K562 (cell line): ENCODE measurements at regions of chr12 and their contacts with region 1.

Region 1: DNA sequence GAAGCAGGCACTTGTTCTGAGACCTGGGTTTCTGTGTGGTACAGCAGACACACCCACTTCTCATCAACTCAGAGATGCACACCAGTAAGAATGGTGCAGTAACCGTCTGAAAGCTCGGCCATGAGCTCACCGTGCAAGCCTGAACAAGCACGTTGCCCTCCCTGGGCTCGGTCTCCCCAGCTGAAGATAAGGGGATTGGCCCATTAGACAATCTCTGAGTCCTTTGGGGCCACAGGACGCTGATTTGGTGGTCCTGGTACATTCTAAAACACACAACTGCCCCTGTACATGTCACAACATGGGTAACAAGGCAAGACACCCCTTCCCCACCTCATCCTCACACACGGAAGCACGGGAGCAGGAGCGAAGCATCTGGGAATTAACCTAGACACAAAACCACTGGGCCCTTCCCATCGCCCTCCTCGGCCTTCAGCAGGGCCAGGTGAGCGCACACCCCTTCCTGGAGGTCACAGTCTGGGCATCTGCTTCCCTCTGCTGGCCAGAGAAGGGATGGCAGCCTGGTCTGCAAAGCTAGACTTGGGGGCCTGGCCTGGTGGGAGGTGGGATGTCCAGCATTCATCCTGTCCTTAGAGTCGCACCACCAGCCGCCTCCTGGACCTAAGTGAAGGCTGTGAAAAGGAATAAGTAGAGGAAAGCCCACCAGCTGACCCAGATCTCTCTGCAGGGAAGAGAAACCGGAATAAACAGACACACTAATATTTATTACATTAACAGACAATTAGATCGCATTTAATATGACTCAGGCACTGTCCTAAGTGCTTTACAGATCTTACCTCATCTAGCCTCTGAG is 18.9 kb upstream of the SMUG1 start:
- DNase-seq: peak; percentile 83 to 90 (median 88)
- ATAC-seq: peak; percentile 94
- H3K4me3 ChIP-seq: no peak overlapping the region
- H3K27ac ChIP-seq: no peak overlapping the region
- H3K4me1 ChIP-seq: peaks cover 6 to 13% of the 10 kb centered on the region in 2 experiments
- H3K27me3 ChIP-seq: peaks cover 2 to 14% of the 10 kb centered on the region in 2 experiments; a peak in 2 of 5 replicates
- CTCF ChIP-seq: peak; percentile 93 to 98 (median 94)
- EP300 ChIP-seq: no peak
- POLR2A ChIP-seq: no peak
- RAD21 ChIP-seq: peak; percentile 74 to 94

Region 2: DNA sequence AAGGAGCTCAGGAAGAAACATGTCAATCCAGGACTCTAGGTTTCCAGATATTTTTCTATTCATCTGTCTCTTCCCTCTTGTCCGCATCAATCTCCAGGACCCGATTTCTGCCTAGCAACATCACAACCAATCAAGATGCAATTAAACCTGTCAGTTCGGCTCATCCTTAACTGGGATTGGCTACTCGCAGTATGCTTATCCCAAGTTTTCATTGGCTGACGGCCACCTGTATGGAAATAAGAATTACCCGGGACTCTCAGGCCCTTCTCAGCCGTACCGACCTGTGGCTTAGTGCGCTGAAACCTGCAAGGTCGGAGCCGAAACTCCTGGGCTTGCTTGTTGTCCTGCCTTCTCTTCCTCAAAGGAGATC is 511.4 kb before region 1 on chr12:
- CTCF ChIA-PET with region 1: no interaction called
- POLR2A ChIA-PET with region 1: interaction called, 3 read pairs
- in situ Hi-C with region 1: loop called (anchors 10 kb)
- intact Hi-C with region 1: no loop called
- DNase-seq: peak; percentile 59 to 94 (median 65)
- ATAC-seq: peak; percentile 95
- H3K4me3 ChIP-seq: no peak overlapping the region
- H3K27ac ChIP-seq: no peak overlapping the region
- H3K4me1 ChIP-seq: peaks cover 0 to 11% of the 10 kb centered on the region in 2 experiments; a peak in 2 of 5 replicates
- H3K27me3 ChIP-seq: peaks cover 54 to 60% of the 10 kb centered on the region in 2 experiments
- CTCF ChIP-seq: no peak
- EP300 ChIP-seq: no peak
- POLR2A ChIP-seq: no peak
- RAD21 ChIP-seq: no peak

Region 3: GRCh38 chr12:53766881-53767280 is 440.8 kb before region 1 on chr12:
- CTCF ChIA-PET with region 1: no interaction called
- POLR2A ChIA-PET with region 1: no interaction called
- in situ Hi-C with region 1: loop called (anchors 25 kb)
- intact Hi-C with region 1: loop called (anchors 10 kb)
- DNase-seq: no peak
- ATAC-seq: no peak
- H3K4me3 ChIP-seq: no peak overlapping the region
- H3K27ac ChIP-seq: no peak overlapping the region
- H3K4me1 ChIP-seq: no peaks in the 10 kb centered on the region
- H3K27me3 ChIP-seq: peaks cover 7 to 17% of the 10 kb centered on the region in 2 experiments; a peak in 4 of 5 replicates
- CTCF ChIP-seq: no peak
- EP300 ChIP-seq: no peak
- POLR2A ChIP-seq: no peak
- RAD21 ChIP-seq: no peak

Region 4: GRCh38 chr12:53899232-53899631 is 308.5 kb before region 1 on chr12:
- CTCF ChIA-PET with region 1: no interaction called
- POLR2A ChIA-PET with region 1: no interaction called
- in situ Hi-C with region 1: no loop called
- intact Hi-C with region 1: no loop called
- DNase-seq: no peak
- ATAC-seq: no peak
- H3K4me3 ChIP-seq: no peak overlapping the region
- H3K27ac ChIP-seq: no peak overlapping the region
- H3K4me1 ChIP-seq: no peaks in the 10 kb centered on the region
- H3K27me3 ChIP-seq: peaks cover 0 to 6% of the 10 kb centered on the region in 2 experiments; a peak in 4 of 5 replicates
- CTCF ChIP-seq: no peak
- EP300 ChIP-seq: no peak
- POLR2A ChIP-seq: no peak
- RAD21 ChIP-seq: no peak

Region 5: DNA sequence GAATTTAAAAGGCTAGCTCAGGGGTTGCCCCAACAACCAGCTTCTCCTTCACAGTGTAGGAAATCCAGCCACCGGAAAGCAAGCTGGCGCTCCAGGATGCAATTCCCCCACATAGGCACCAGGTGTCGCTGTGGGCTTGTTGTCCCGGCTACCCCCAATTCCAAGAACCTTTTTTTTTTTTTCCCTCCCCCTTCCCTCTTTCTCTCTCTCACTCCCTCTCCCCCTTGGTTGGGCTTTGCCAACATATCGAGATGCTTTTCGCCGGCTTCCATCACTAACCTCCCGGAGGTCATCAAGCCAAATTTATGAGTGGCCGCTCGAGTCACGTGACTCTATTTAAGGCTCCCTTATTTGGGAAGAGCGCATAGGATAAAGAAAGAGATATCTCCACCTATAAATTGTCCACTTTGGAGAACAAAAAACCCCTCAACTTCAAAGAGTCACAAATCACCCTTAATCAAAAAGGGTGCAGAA is 175.0 kb before region 1 on chr12 and contains the start of gene HOXC5:
- CTCF ChIA-PET with region 1: interaction called, 36 read pairs
- POLR2A ChIA-PET with region 1: no interaction called
- in situ Hi-C with region 1: no loop called
- intact Hi-C with region 1: no loop called
- DNase-seq: peak; percentile 82 to 86 (median 84)
- ATAC-seq: peak; percentile 70
- H3K4me3 ChIP-seq: no peak within 1 kb of the TSS
- H3K27ac ChIP-seq: no peak within 1 kb of the TSS
- H3K4me1 ChIP-seq: peaks cover 0 to 28% of the 10 kb centered on the region in 2 experiments; a peak in 2 of 5 replicates
- H3K27me3 ChIP-seq: no peaks in the 10 kb centered on the region
- CTCF ChIP-seq: peak; percentile 95 to 96 (median 95)
- EP300 ChIP-seq: 0 out of 2 replicates have a peak, but pooled peaks have one; percentile 17
- POLR2A ChIP-seq: no peak
- RAD21 ChIP-seq: peak; percentile 80 to 89
- polyA plus RNA-seq, gene HOXC5: not detected

Region 6: DNA sequence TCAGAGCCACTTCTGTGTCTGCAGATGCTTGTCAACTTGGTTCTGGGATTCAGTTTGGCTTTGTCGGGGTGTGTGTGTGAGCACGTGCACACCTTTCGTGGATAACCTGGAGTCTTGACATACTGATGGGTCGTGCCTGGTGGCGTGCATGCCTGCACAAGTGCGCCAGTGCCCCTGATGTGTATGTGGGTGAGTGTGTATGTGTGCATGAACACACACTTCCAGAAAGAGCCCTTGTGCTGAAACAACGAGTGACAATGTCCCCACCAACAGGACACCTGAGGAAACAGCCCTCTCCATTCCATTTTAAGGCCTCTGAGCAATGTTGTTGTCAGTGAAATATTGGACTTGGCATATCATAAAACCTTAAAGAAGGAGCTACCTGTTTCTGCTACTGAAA is 72.8 kb before region 1 on chr12:
- CTCF ChIA-PET with region 1: interaction called, 3 read pairs
- POLR2A ChIA-PET with region 1: no interaction called
- in situ Hi-C with region 1: no loop called
- intact Hi-C with region 1: loop called (anchors 5 kb)
- DNase-seq: peak in 1 of 4 experiments; percentile 29
- ATAC-seq: peak; percentile 72
- H3K4me3 ChIP-seq: no peak overlapping the region
- H3K27ac ChIP-seq: no peak overlapping the region
- H3K4me1 ChIP-seq: no peaks in the 10 kb centered on the region
- H3K27me3 ChIP-seq: peaks cover 27 to 72% of the 10 kb centered on the region in 2 experiments; a peak in 4 of 5 replicates
- CTCF ChIP-seq: peak; percentile 31 to 46 (median 42); a peak in 4 of 6 replicates
- EP300 ChIP-seq: no peak
- POLR2A ChIP-seq: no peak
- RAD21 ChIP-seq: peak; percentile 19 to 68; a peak in 3 of 4 replicates